Calu3 (cell line): ENCODE measurements at regions of chrX and their contacts with region 1.

Region 1: DNA sequence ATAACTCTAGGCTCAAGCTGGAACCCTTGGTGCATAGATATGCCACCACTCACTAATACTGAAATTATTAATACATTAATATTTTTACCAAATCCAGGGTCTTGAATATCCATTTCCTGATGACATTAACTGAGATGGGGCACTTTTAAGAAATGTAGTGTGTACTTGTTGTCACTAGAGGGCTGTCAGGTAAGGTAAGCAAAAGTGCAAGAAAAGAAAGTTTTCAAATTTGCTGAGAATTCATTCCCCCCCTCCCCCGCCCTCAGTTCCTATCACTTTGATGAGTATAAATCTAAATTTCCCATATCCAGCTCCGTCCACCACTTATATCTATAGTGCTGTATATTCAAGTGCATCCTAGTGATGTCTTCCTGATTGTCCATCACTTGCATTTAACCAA is 20.5 kb upstream of the WDR44 start:
- DNase-seq: no peak
- H3K4me3 Mint-ChIP-seq: no peak overlapping the region
- H3K27ac Mint-ChIP-seq: no peak overlapping the region
- H3K4me1 Mint-ChIP-seq: no peaks in the 10 kb centered on the region
- H3K27me3 Mint-ChIP-seq: peaks cover 12% of the 10 kb centered on the region
- CTCF ChIP-seq: no peak

Region 2: GRCh38 chrX:118603981-118604380 is 278.5 kb after region 1 on chrX:
- CTCF ChIA-PET with region 1: no interaction called
- intact Hi-C with region 1: loop called (anchors 5 kb)
- DNase-seq: peak; percentile 50
- H3K4me3 Mint-ChIP-seq: peak overlapping the region; percentile 28
- H3K27ac Mint-ChIP-seq: peak overlapping the region; percentile 27
- H3K4me1 Mint-ChIP-seq: peaks cover 8% of the 10 kb centered on the region
- H3K27me3 Mint-ChIP-seq: no peaks in the 10 kb centered on the region
- CTCF ChIP-seq: peak; percentile 37